ENCODE measurements at regions of chr3 and their contacts with region 1.

Region 1: GRCh38 chr3:191051037-191051436 is 148.0 kb upstream of the OSTN start:
- DNase-seq: peak; percentile 60
- H3K4me3 ChIP-seq: no peak overlapping the region
- H3K27ac ChIP-seq: no peak overlapping the region
- H3K4me1 ChIP-seq: no peaks in the 10 kb centered on the region
- H3K27me3 ChIP-seq: no peaks in the 10 kb centered on the region

Region 2: DNA sequence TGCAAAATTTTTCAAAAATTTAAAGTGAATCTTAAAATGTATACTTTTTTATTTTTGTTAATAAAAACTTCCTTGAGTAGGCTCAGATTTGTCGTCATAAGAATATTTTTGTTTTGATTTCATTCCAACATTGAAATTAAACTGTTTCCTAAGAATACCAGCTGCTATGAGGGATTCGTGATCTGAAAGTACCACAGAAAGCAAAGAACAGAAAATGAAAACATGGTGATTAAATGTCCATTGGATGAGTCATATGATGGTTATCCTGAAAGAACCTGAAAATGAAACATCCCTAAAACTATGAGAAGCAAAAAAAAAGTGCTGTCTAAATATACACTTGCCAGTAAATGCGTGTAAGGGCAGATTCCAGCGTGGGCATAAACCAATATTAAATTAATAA is 332.4 kb before region 1 on chr3:
- in situ Hi-C with region 1: loop called (anchors 10 kb)
- DNase-seq: peak; percentile 80
- H3K4me3 ChIP-seq: peak overlapping the region; percentile 27
- H3K27ac ChIP-seq: peak overlapping the region; percentile 19; the same call in 1 of the 2 replicates
- H3K4me1 ChIP-seq: peaks cover 14% of the 10 kb centered on the region
- H3K27me3 ChIP-seq: no peaks in the 10 kb centered on the region

Region 3: GRCh38 chr3:190926619-190927018 is 124.4 kb before region 1 on chr3:
- in situ Hi-C with region 1: no loop called
- DNase-seq: no peak
- H3K4me3 ChIP-seq: no peak overlapping the region
- H3K27ac ChIP-seq: no peak overlapping the region
- H3K4me1 ChIP-seq: no peaks in the 10 kb centered on the region
- H3K27me3 ChIP-seq: no peaks in the 10 kb centered on the region

Measured in GM23248 (cell line).